HepG2 (cell line): ENCODE measurements at regions of chr11 and their contacts with region 1.

Region 1: GRCh38 chr11:37574361-37574760 is 976.3 kb upstream of the RAG2 start:
- DNase-seq: no peak
- ATAC-seq: no peak
- H3K4me3 ChIP-seq: no peak overlapping the region
- H3K27ac ChIP-seq: no peak overlapping the region
- H3K4me1 ChIP-seq: no peaks in the 10 kb centered on the region
- H3K27me3 ChIP-seq: no peaks in the 10 kb centered on the region
- CTCF ChIP-seq: no peak
- EP300 ChIP-seq: no peak
- POLR2A ChIP-seq: no peak
- RAD21 ChIP-seq: no peak

Region 2: DNA sequence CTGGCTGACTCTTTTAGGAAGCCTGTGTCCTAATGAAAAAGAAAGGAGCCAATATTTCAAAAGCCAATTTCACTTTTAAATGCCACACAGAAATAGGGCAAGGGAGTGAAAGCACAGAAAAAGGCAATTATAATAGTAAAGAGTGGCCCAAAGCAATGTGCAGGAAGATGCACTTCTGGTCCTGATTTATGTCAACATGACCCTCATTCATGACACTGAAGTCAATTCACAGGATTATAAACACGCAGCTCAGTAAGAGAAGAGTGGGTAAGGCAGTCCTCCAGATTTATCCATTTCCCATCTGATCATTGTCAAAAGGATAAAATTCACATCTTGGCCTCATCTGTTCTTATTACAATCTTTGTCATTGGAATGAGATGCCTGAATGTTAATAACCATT is 73.4 kb after region 1 on chr11:
- CTCF ChIA-PET with region 1: no interaction called
- POLR2A ChIA-PET with region 1: no interaction called
- in situ Hi-C with region 1: no loop called
- intact Hi-C with region 1: loop called (anchors 2 kb)
- DNase-seq: no peak
- ATAC-seq: no peak
- H3K4me3 ChIP-seq: no peak overlapping the region
- H3K27ac ChIP-seq: no peak overlapping the region
- H3K4me1 ChIP-seq: no peaks in the 10 kb centered on the region
- H3K27me3 ChIP-seq: no peaks in the 10 kb centered on the region
- CTCF ChIP-seq: no peak
- EP300 ChIP-seq: no peak
- POLR2A ChIP-seq: no peak
- RAD21 ChIP-seq: no peak